Activated naive CD4-positive, alpha-beta T cell treated with anti-CD3 and anti-CD28 coated beads for 36 hours (primary cell): ENCODE measurements at regions of chr3 and their contacts with region 1.

Region 1: DNA sequence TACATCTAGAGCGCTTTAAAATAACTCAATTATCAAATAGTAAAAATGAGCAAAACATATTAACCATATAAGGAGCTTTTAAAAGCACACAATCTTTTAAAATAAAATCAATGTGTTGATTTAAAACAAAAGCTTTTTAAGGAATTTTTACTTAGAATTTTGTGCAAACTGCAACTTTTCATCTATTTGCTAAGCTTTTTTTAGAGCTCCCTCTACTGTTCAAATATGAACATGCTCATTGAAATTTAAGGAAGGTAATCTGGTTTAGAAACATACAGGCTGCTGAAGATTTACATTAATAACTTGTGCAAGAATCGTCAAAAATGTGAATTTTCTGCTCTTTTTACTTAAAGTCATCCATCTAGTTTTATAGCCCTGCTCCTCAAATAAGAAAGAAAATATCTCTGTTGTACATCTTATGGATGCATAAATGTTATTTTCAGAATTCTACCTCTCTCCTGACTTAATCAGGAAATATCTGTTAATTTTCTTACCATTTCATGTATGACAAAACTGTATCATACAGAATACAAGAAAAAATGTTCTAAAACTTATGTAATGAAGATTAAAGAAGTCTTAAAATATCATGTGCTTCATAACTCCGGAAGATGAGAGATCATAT is 469.4 kb upstream of the ROBO2 start:
- DNase-seq: no peak
- H3K4me3 Mint-ChIP-seq: no peak overlapping the region
- H3K27ac Mint-ChIP-seq: no peak overlapping the region
- H3K4me1 Mint-ChIP-seq: no peaks in the 10 kb centered on the region
- H3K27me3 Mint-ChIP-seq: no peaks in the 10 kb centered on the region

Region 2: GRCh38 chr3:75814797-75815196 is 755.8 kb before region 1 on chr3:
- CTCF ChIA-PET with region 1: no interaction called
- intact Hi-C with region 1: loop called (anchors 5 kb)
- DNase-seq: no peak
- H3K4me3 Mint-ChIP-seq: no peak overlapping the region
- H3K27ac Mint-ChIP-seq: no peak overlapping the region
- H3K4me1 Mint-ChIP-seq: no peaks in the 10 kb centered on the region
- H3K27me3 Mint-ChIP-seq: peaks cover 2% of the 10 kb centered on the region